Gastrocnemius medialis (tissue), 4 donors: ENCODE measurements at regions of chrX and their contacts with region 1.

Region 1: GRCh38 chrX:55057675-55058249 is 17.1 kb upstream of the PAGE2B start:
- DNase-seq: no peak
- ATAC-seq: peak in 1 of 2 donors; percentile 69
- H3K4me3 ChIP-seq: peak overlapping the region in 1 of 4 donors; percentile 32
- H3K27ac ChIP-seq: no peak overlapping the region
- H3K4me1 ChIP-seq: no peaks in the 10 kb centered on the region
- H3K27me3 ChIP-seq: peaks cover 0 to 5% (median 0%) of the 10 kb centered on the region in 3 donors
- CTCF ChIP-seq: peak; percentile 62 to 78 (median 68)
- POLR2A ChIP-seq: no peak

Region 2: GRCh38 chrX:54891573-54891972 is 166.2 kb before region 1 on chrX:
- in situ Hi-C with region 1: loop called in 2 of 4 experiments (anchors 10 to 25 kb)
- intact Hi-C with region 1: loop called (anchors 1 kb)
- DNase-seq: peak in 1 of 2 donors; percentile 12
- ATAC-seq: peak in 1 of 2 donors; percentile 77
- H3K4me3 ChIP-seq: no peak overlapping the region
- H3K27ac ChIP-seq: no peak overlapping the region
- H3K4me1 ChIP-seq: no peaks in the 10 kb centered on the region
- H3K27me3 ChIP-seq: no peaks in the 10 kb centered on the region
- CTCF ChIP-seq: peak in 4 of 5 experiments; percentile 18 to 54 (median 41)
- POLR2A ChIP-seq: no peak